K562 (cell line): ENCODE measurements at regions of chr13 and their contacts with region 1.

Region 1: GRCh38 chr13:86974995-86975328 is 696.2 kb upstream of the SLITRK5 start:
- DNase-seq: peak in 1 of 4 experiments; percentile 2
- ATAC-seq: no peak
- H3K4me3 ChIP-seq: no peak overlapping the region
- H3K27ac ChIP-seq: no peak overlapping the region
- H3K4me1 ChIP-seq: no peaks in the 10 kb centered on the region
- H3K27me3 ChIP-seq: no peaks in the 10 kb centered on the region
- CTCF ChIP-seq: no peak
- EP300 ChIP-seq: no peak
- POLR2A ChIP-seq: no peak
- RAD21 ChIP-seq: peak in 1 of 2 experiments; percentile 43; a peak in 2 of 4 replicates

Region 2: DNA sequence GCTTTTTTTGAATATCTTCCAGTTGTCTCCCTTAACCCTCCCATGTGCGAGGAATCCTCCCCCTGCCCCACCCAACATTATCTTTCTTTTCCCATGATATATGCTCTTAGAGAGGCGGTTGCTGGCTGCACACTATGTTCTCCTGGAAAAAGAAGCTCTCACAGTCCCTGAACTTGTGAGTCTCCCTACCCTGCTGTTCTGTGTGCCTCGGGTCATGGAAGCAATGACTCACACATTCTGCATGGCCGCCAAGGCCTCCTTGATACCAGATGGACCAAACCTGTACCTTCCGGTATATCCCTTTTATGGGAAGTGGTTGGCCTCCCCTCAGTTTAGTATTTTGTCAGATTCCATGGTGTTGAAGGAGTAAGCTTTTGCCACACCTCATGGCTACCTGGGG is 1881.2 kb before region 1 on chr13:
- CTCF ChIA-PET with region 1: no interaction called
- POLR2A ChIA-PET with region 1: no interaction called
- in situ Hi-C with region 1: loop called (anchors 25 kb)
- intact Hi-C with region 1: no loop called
- DNase-seq: no peak
- ATAC-seq: no peak
- H3K4me3 ChIP-seq: no peak overlapping the region
- H3K27ac ChIP-seq: no peak overlapping the region
- H3K4me1 ChIP-seq: no peaks in the 10 kb centered on the region
- H3K27me3 ChIP-seq: no peaks in the 10 kb centered on the region
- CTCF ChIP-seq: no peak
- EP300 ChIP-seq: no peak
- POLR2A ChIP-seq: no peak
- RAD21 ChIP-seq: no peak

Region 3: DNA sequence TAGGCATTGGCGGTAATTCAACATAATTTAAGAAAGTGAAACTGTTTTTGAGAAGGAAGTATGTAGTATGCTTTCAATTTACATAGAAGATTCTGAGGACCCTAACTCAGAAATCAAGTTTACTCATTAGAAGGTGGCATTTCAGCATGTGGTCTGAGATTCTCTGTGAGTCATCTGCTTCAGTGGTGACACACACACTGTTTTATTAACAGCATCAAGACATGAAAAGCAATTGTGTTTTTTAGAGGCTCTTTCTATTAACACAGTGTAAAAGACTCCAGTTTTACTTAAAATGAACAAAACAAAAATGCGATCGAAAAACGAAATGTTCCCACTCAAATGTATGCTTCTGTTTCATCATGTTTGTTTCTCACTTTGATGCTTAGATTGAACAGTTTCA is 373.6 kb before region 1 on chr13:
- CTCF ChIA-PET with region 1: no interaction called
- POLR2A ChIA-PET with region 1: no interaction called
- in situ Hi-C with region 1: no loop called
- intact Hi-C with region 1: no loop called
- DNase-seq: no peak
- ATAC-seq: no peak
- H3K4me3 ChIP-seq: no peak overlapping the region
- H3K27ac ChIP-seq: no peak overlapping the region
- H3K4me1 ChIP-seq: no peaks in the 10 kb centered on the region
- H3K27me3 ChIP-seq: no peaks in the 10 kb centered on the region
- CTCF ChIP-seq: no peak
- EP300 ChIP-seq: no peak
- POLR2A ChIP-seq: no peak
- RAD21 ChIP-seq: no peak

Region 4: DNA sequence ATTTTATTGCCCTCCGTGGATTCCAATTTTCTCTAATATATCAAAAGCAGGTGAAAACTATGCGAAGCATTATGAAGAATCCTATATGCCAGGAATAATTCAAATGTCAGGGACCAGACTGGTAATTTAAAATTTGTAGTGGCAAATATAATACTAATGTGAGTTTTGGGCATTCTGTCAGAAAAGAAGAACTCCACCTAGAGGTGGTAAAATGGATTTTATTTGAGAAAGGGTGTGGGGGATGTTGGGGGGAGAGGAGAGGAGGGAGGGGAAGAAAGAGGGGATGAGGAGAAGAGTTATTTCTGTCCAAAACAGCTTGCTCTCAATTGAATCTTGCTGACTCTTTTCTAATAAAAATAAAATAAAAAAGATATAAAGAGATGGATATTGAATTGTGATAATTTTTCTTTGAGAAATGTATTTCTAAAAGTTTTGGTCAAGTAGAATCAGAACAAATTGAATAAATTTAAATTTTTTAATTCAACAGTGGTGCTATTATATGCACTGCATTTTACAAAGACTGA is 233.1 kb before region 1 on chr13:
- CTCF ChIA-PET with region 1: no interaction called
- POLR2A ChIA-PET with region 1: no interaction called
- in situ Hi-C with region 1: no loop called
- intact Hi-C with region 1: no loop called
- DNase-seq: no peak
- ATAC-seq: no peak
- H3K4me3 ChIP-seq: no peak overlapping the region
- H3K27ac ChIP-seq: no peak overlapping the region
- H3K4me1 ChIP-seq: no peaks in the 10 kb centered on the region
- H3K27me3 ChIP-seq: no peaks in the 10 kb centered on the region
- CTCF ChIP-seq: no peak
- EP300 ChIP-seq: no peak
- POLR2A ChIP-seq: no peak
- RAD21 ChIP-seq: no peak